BJ (cell line): ENCODE measurements at regions of chr1 and their contacts with region 1.

Region 1: DNA sequence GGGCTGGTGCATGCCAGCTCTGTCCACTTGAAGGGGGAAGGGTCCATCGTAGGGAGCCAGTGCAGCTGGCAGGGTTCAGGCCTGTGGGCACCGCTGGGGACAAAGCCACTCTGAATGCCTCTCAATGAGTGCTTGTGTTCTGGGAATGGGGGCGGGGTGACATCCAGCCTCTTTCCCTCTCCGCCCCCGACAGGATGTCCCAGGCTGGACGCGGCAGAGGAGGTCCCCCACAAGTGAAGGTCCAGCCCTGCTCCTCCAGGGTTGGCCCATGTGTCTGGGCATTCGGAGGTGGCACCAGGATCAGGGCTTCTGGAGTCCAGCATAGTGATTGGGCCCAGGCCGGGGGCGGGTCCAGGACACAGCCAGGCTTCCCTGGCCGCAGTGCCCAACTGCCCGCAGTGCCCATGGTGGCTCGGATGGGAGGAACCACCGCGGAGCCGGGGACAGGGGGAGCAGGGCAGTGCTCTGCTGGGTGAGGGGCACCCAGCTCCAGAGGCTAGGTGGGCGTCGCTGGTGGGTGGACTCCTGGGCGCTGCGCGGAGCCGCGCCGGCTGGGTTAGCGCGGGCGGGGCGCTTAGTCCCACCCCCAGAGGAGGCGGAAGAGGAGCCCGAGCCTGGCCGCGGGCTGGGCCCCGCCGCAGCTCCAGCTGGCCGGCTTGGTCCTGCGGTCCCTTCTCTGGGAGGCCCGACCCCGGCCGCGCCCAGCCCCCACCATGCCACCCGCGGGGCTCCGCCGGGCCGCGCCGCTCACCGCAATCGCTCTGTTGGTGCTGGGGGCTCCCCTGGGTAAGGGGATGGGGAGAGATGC is at the start of gene SHISA4:
- DNase-seq: no peak
- H3K4me3 ChIP-seq: peak within 1 kb of the TSS; percentile 76
- H3K27me3 ChIP-seq: no peaks in the 10 kb centered on the region
- CTCF ChIP-seq: no peak
- polyA plus RNA-seq, gene SHISA4: 36.9 and 72.6 TPM in 2 replicates

Region 2: DNA sequence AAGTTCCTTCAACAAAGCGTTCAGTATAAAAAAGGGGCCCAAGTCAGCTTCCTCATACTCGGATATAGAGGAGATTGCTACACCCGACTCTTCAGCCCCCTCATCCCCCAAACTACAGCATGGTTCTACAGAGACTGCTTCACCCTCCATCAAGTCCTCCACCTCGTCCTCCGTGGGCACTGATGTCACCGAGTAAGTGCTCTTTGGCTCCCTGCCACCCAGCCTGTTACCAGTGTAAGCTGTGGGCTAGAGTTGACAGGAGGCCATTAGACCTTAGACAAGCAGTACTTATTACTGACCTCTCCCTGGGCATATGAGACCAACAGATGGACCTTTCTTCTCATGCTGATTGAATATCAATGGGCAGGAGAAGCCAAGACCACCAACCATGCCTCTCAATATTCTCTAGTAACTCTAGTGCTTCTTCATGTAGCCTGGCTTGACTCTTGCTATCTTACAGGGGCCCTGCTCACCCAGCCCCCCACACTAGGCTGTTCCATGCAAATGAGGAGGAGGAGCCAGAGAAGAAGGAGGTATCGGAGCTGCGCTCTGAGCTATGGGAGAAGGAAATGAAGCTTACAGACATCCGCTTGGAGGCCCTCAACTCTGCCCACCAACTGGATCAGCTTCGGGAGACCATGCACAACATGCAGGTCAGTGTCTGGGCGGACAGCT is 80.4 kb before region 1 on chr1:
- CTCF ChIA-PET with region 1: no interaction called
- POLR2A ChIA-PET with region 1: no interaction called
- DNase-seq: no peak
- H3K4me3 ChIP-seq: no peak overlapping the region
- H3K27me3 ChIP-seq: no peaks in the 10 kb centered on the region
- CTCF ChIP-seq: no peak

Region 3: DNA sequence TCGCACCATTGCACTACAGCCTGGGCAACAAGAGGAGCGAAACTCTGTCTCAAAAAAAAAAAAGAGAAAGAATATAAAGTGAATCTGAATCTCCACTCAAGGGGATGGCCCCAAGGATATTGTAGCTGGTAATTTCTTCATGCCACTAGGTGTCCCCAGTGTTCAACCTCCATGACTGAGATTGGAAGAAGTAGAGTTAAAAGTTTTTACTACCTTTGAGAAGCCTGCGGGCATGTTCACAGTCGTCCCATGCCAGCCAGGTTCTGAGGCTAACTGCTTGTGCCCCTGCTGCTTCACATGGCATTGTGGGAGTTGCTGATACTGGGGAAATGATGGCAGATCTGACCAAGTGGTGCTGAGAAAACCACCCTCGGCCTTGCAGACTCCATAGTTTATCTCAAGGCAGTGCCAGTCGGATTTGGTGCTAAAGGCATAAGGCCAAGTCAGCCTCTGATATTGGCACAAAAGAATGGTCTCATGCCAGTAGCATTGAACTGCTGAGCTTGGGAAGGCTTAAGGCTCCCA is 10.5 kb before region 1 on chr1:
- CTCF ChIA-PET with region 1: interaction called, 16 read pairs
- POLR2A ChIA-PET with region 1: no interaction called
- DNase-seq: no peak
- H3K4me3 ChIP-seq: no peak overlapping the region
- H3K27me3 ChIP-seq: no peaks in the 10 kb centered on the region
- CTCF ChIP-seq: peak; percentile 71